GM10248 (cell line): ENCODE measurements at regions of chr3 and their contacts with region 1.

Region 1: GRCh38 chr3:183385698-183386613 is 42.5 kb downstream of the MCF2L2 start:
- DNase-seq: peak; percentile 62
- CTCF ChIP-seq: peak; percentile 65

Region 2: GRCh38 chr3:182713743-182714517 is 672.0 kb before region 1 on chr3:
- CTCF ChIA-PET with region 1: interaction called, 55 read pairs
- POLR2A ChIA-PET with region 1: no interaction called
- DNase-seq: peak; percentile 45
- CTCF ChIP-seq: peak; percentile 83

Region 3: GRCh38 chr3:182879031-182879611 is 506.8 kb before region 1 on chr3:
- CTCF ChIA-PET with region 1: no interaction called
- POLR2A ChIA-PET with region 1: no interaction called
- DNase-seq: no peak
- CTCF ChIP-seq: no peak

Region 4: GRCh38 chr3:183122257-183122932 is 263.6 kb before region 1 on chr3:
- CTCF ChIA-PET with region 1: interaction called, 132 read pairs
- POLR2A ChIA-PET with region 1: no interaction called
- DNase-seq: peak; percentile 61
- CTCF ChIP-seq: peak; percentile 77

Region 5: DNA sequence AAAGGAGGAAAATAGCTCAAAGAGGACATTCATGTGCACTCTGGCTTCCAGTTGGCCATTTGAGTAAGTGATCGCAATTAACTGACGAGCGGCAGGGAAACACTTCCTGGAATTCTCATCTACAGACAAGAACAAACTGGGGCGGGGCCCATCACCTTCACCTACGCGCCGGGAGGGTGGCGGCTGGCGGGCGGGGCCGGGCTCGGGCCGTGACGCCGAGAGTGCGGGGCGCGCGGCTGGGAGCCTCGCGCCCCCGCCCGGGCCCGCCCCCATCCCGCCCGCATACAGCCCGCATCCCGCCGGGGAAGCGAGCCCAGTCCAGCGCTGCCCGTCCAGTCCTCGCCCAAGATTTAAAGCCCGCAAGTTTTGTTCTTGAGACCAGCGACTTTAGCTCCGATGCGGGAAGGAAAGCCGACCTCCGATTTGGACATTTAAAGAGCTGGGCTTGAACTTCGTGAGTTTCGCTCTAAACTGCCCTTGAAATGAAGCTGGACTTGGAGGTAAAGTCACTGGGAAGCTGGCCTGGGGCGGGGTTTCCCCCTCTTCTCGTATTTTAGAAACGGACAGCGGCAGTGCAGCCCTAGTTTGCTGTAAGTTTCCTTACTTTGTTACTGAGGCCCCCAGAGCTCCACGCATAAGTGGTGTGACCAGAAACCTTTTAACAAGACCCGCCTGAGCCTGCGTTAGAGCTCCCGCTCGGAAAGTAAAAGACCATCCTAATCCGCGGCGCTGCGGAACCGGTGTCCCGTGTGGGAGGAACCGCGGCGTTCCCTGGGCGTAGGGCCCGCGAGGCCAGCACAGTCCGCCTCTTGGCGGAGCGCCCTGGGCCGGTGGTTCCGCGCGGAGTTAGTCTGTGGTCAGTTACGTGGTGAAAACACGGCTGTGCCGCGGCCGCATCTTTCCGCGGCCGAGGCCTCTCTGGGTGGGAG is 132.7 kb before region 1 on chr3 and contains the start of gene B3GNT5:
- CTCF ChIA-PET with region 1: interaction called, 11 read pairs
- POLR2A ChIA-PET with region 1: no interaction called
- DNase-seq: peak; percentile 24
- CTCF ChIP-seq: no peak

Region 6: GRCh38 chr3:183396662-183397391 is 10.9 kb after region 1 on chr3:
- CTCF ChIA-PET with region 1: interaction called, 11 read pairs
- POLR2A ChIA-PET with region 1: no interaction called
- DNase-seq: no peak
- CTCF ChIP-seq: no peak